Spleen (tissue), 13 donors: ENCODE measurements at regions of chr1 and their contacts with region 1.

Region 1: GRCh38 chr1:27662707-27663393 is 9.1 kb downstream of the IFI6 start:
- DNase-seq: peak; percentile 92
- H3K4me3 ChIP-seq: peak overlapping the region in 2 of 8 donors; percentile 10 to 53
- H3K27ac ChIP-seq: peak overlapping the region; percentile 77 to 99 (median 88)
- H3K4me1 ChIP-seq: peaks cover 34 to 62% (median 52%) of the 10 kb centered on the region in 6 donors
- H3K27me3 ChIP-seq: no peaks in the 10 kb centered on the region
- CTCF ChIP-seq: peak; percentile 82 to 98 (median 92)
- POLR2A ChIP-seq: no peak

Region 2: GRCh38 chr1:27402349-27402754 is 260.5 kb before region 1 on chr1:
- intact Hi-C with region 1: loop called (anchors 5 kb)
- DNase-seq: peak; percentile 91
- H3K4me3 ChIP-seq: no peak overlapping the region
- H3K27ac ChIP-seq: peak overlapping the region in 7 of 8 donors; percentile 67 to 84 (median 75)
- H3K4me1 ChIP-seq: peaks cover 31 to 90% (median 57%) of the 10 kb centered on the region in 6 donors
- H3K27me3 ChIP-seq: no peaks in the 10 kb centered on the region
- CTCF ChIP-seq: peak in 10 of 11 experiments; percentile 46 to 70 (median 56)
- POLR2A ChIP-seq: no peak

Region 3: GRCh38 chr1:27436204-27437159 is 226.4 kb before region 1 on chr1:
- intact Hi-C with region 1: no loop called
- DNase-seq: no peak
- H3K4me3 ChIP-seq: peak overlapping the region in 6 of 8 donors; percentile 4 to 54 (median 9)
- H3K27ac ChIP-seq: peak overlapping the region; percentile 61 to 90 (median 84)
- H3K4me1 ChIP-seq: peaks cover 58 to 98% (median 85%) of the 10 kb centered on the region in 6 donors
- H3K27me3 ChIP-seq: no peaks in the 10 kb centered on the region
- CTCF ChIP-seq: no peak
- POLR2A ChIP-seq: no peak

Region 4: GRCh38 chr1:27609210-27609555 is 53.7 kb before region 1 on chr1:
- intact Hi-C with region 1: loop called (anchors 2 kb)
- DNase-seq: no peak
- H3K4me3 ChIP-seq: no peak overlapping the region
- H3K27ac ChIP-seq: peak overlapping the region in 6 of 8 donors; percentile 51 to 66 (median 63)
- H3K4me1 ChIP-seq: peaks cover 33 to 99% (median 64%) of the 10 kb centered on the region in 6 donors
- H3K27me3 ChIP-seq: no peaks in the 10 kb centered on the region
- CTCF ChIP-seq: no peak
- POLR2A ChIP-seq: no peak

Region 5: DNA sequence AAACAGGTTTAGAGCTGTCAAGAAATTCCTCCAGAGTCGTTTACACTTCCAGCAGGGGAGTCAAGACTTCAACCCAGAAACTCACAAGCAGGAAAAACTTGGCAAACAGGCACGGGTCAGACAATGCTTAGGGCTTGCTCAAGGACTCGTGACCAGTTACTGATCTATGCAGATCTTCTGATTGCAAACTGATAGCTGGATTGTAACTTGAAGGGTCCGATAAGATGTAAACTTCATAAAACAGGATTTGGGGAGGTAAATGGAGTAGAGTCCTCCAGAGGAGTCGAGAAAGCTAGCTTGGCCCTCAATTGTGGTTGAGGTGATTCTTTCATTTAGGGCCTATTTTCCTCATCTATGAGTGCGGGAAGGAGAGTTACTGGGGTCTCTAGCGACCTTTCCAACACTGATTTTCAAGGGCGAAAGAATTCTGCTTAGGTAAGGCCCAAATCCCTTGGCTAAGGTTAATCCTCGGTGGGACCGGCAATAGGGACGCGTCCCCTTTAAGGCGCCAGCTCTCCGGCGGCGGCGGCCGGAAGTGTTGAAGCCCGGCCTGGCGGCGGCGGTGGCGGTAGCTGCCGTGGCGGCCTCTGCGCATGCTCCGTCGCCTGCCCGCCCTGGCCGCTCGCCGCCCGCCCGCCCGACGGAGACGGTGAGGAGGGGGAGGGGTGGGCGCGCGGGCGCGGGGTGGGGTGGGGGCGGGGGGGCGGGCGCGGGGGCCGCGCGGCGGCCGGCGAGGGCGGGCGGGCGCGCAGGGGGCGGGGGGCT is 1005.5 kb after region 1 on chr1 and contains the start of gene GMEB1:
- intact Hi-C with region 1: no loop called
- DNase-seq: peak; percentile 97
- H3K4me3 ChIP-seq: peak within 1 kb of the TSS; percentile 80 to 99 (median 90)
- H3K27ac ChIP-seq: peak within 1 kb of the TSS; percentile 99 to 100 (median 99)
- H3K4me1 ChIP-seq: peaks cover 10 to 41% (median 30%) of the 10 kb centered on the region in 6 donors
- H3K27me3 ChIP-seq: no peaks in the 10 kb centered on the region
- CTCF ChIP-seq: peak in 5 of 11 experiments; percentile 5 to 45 (median 28)
- POLR2A ChIP-seq: no peak
- total RNA-seq, gene GMEB1: 15.2 to 20.6 (median 17.3) TPM